ENCODE measurements at regions of chr11 and their contacts with region 1.

Region 1: GRCh38 chr11:34890812-34891211 is 25.4 kb downstream of the APIP start:
- DNase-seq: peak; percentile 59
- ATAC-seq: no peak
- H3K4me3 ChIP-seq: no peak overlapping the region
- H3K27ac ChIP-seq: no peak overlapping the region
- H3K4me1 ChIP-seq: peaks cover 22% of the 10 kb centered on the region
- H3K27me3 ChIP-seq: no peaks in the 10 kb centered on the region
- CTCF ChIP-seq: peak; percentile 61
- EP300 ChIP-seq: no peak
- POLR2A ChIP-seq: no peak
- RAD21 ChIP-seq: peak; percentile 51; the same call in 1 of the 2 replicates

Region 2: DNA sequence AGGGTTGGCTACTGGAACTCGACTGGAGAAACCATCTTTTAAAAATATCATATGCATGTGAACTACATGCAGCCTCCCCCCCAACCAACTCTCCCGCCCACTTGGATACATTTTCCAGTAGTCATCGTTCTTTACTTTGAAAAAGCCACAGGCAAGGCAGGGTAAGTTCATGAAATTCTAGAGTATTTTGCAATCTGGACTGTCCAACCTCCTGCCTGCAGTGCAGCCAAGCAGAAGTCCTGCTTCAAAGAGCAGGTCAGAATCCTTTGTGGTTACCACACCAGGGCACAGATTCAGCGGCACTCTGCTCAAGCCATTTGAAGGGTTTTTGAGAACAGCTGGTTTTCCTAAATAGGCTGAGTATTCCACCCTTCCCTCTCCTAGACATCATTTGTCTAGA is 389.3 kb before region 1 on chr11:
- CTCF ChIA-PET with region 1: no interaction called
- POLR2A ChIA-PET with region 1: no interaction called
- in situ Hi-C with region 1: no loop called
- intact Hi-C with region 1: loop called (anchors 2 kb)
- DNase-seq: peak; percentile 92
- ATAC-seq: peak; percentile 97
- H3K4me3 ChIP-seq: no peak overlapping the region
- H3K27ac ChIP-seq: peak overlapping the region; percentile 60
- H3K4me1 ChIP-seq: peaks cover 76% of the 10 kb centered on the region
- H3K27me3 ChIP-seq: no peaks in the 10 kb centered on the region
- CTCF ChIP-seq: no peak
- EP300 ChIP-seq: peak; percentile 55 to 87
- POLR2A ChIP-seq: peak in 1 of 2 experiments; percentile 43; a peak in 2 of 4 replicates
- RAD21 ChIP-seq: no peak

Region 3: GRCh38 chr11:34565417-34566207 is 325.2 kb before region 1 on chr11:
- CTCF ChIA-PET with region 1: interaction called, 21 read pairs
- POLR2A ChIA-PET with region 1: no interaction called
- in situ Hi-C with region 1: no loop called
- intact Hi-C with region 1: loop called (anchors 5 kb)
- DNase-seq: peak; percentile 34
- ATAC-seq: peak; percentile 80
- H3K4me3 ChIP-seq: no peak overlapping the region
- H3K27ac ChIP-seq: no peak overlapping the region
- H3K4me1 ChIP-seq: peaks cover 24% of the 10 kb centered on the region
- H3K27me3 ChIP-seq: peaks cover 0 to 4% of the 10 kb centered on the region in 2 experiments; a peak in 2 of 5 replicates
- CTCF ChIP-seq: peak; percentile 69
- EP300 ChIP-seq: no peak
- POLR2A ChIP-seq: no peak
- RAD21 ChIP-seq: peak; percentile 45; the same call in 1 of the 2 replicates

Region 4: GRCh38 chr11:34749666-34750659 is 140.8 kb before region 1 on chr11:
- CTCF ChIA-PET with region 1: no interaction called
- POLR2A ChIA-PET with region 1: no interaction called
- in situ Hi-C with region 1: no loop called
- intact Hi-C with region 1: loop called (anchors 10 kb)
- DNase-seq: no peak
- ATAC-seq: no peak
- H3K4me3 ChIP-seq: no peak overlapping the region
- H3K27ac ChIP-seq: no peak overlapping the region
- H3K4me1 ChIP-seq: peaks cover 9% of the 10 kb centered on the region
- H3K27me3 ChIP-seq: no peaks in the 10 kb centered on the region; a peak in 1 of 5 replicates
- CTCF ChIP-seq: no peak
- EP300 ChIP-seq: no peak
- POLR2A ChIP-seq: no peak
- RAD21 ChIP-seq: no peak

Region 5: DNA sequence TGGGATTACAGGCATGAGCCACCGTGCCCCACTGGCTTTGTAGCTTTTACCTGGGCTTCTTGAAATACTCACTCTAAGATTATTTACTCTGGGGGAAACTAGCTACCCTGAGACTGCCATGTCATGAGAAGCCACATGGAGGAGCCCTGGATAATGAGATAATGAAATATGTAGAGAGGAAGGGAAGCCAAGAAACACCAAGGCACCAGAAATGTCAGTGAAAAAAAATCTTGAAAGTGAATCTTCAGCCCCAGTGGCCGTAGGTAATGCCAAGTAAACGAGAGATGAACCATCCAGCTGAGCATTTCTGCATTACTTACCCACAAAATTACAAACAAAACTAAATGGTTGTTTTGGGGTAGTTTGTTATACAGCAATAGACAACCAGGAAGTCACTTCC is 100.2 kb before region 1 on chr11:
- CTCF ChIA-PET with region 1: no interaction called
- POLR2A ChIA-PET with region 1: no interaction called
- in situ Hi-C with region 1: no loop called
- intact Hi-C with region 1: no loop called
- DNase-seq: no peak
- ATAC-seq: no peak
- H3K4me3 ChIP-seq: no peak overlapping the region
- H3K27ac ChIP-seq: no peak overlapping the region
- H3K4me1 ChIP-seq: peaks cover 34% of the 10 kb centered on the region
- H3K27me3 ChIP-seq: no peaks in the 10 kb centered on the region
- CTCF ChIP-seq: no peak
- EP300 ChIP-seq: no peak
- POLR2A ChIP-seq: no peak
- RAD21 ChIP-seq: no peak

Region 6: DNA sequence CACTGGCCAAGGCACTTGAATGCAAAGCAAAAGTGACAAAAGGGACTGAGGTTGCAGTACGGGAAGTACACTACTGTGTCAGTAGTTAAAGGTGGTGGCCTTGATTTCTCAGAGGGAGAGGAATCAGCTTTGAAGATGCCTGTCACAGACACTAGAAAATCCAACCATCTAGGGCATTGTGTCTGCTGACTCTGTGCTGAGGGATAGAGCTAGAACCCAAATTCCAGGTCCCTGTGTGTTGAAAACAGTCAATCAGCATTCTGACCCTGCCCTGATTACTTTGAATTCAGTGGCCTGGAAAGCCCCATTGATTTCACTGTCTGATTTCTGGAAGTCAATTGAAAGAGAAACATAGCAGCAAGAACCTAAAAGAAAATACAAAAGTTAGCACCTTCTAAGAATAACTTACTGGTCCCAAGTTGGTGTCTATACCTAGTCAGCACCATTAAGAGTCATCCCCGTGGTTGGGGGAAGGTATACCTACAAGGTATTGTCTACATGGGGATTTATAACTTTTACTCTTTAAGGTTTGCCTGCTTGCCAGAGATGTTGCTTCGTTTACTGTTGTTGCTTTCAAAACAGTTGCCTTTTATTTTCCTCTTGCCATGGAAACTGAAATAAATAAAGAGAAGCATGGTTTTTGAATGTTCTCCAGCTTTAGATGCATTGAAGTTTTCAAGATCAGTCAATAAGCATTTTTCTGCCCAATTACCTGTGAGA is 122.9 kb after region 1 on chr11:
- CTCF ChIA-PET with region 1: no interaction called
- POLR2A ChIA-PET with region 1: no interaction called
- in situ Hi-C with region 1: no loop called
- intact Hi-C with region 1: no loop called
- DNase-seq: no peak
- ATAC-seq: no peak
- H3K4me3 ChIP-seq: no peak overlapping the region
- H3K27ac ChIP-seq: no peak overlapping the region
- H3K4me1 ChIP-seq: peaks cover 28% of the 10 kb centered on the region
- H3K27me3 ChIP-seq: no peaks in the 10 kb centered on the region
- CTCF ChIP-seq: no peak
- EP300 ChIP-seq: no peak
- POLR2A ChIP-seq: no peak
- RAD21 ChIP-seq: no peak

Region 7: DNA sequence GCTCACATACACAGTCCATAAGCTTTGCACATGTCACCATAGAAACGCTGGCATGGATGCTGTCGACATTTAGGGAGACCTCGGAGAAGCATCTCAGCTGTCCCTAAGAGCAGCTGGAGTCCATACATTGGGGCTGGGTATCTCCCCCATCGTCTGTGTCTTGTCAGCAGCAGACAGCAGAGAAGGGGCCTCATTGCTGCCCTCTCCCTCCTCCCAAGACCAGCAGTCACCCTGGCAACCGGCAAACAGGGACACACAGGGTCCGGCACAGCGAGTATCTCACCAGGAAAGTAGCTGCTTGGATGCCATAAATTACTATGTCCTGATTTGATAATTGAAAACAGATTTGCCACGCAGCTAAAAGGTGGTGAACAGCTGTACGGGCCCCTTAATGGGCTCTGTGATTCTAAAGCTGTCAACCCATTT is 332.6 kb after region 1 on chr11:
- CTCF ChIA-PET with region 1: no interaction called
- POLR2A ChIA-PET with region 1: no interaction called
- in situ Hi-C with region 1: no loop called
- intact Hi-C with region 1: no loop called
- DNase-seq: no peak
- ATAC-seq: no peak
- H3K4me3 ChIP-seq: no peak overlapping the region
- H3K27ac ChIP-seq: no peak overlapping the region
- H3K4me1 ChIP-seq: 0 out of 2 replicates have a peak, but pooled peaks cover 6% of the 10 kb centered on the region
- H3K27me3 ChIP-seq: peaks cover 0 to 8% of the 10 kb centered on the region in 2 experiments; a peak in 2 of 5 replicates
- CTCF ChIP-seq: no peak
- EP300 ChIP-seq: no peak
- POLR2A ChIP-seq: no peak
- RAD21 ChIP-seq: no peak

Region 8: DNA sequence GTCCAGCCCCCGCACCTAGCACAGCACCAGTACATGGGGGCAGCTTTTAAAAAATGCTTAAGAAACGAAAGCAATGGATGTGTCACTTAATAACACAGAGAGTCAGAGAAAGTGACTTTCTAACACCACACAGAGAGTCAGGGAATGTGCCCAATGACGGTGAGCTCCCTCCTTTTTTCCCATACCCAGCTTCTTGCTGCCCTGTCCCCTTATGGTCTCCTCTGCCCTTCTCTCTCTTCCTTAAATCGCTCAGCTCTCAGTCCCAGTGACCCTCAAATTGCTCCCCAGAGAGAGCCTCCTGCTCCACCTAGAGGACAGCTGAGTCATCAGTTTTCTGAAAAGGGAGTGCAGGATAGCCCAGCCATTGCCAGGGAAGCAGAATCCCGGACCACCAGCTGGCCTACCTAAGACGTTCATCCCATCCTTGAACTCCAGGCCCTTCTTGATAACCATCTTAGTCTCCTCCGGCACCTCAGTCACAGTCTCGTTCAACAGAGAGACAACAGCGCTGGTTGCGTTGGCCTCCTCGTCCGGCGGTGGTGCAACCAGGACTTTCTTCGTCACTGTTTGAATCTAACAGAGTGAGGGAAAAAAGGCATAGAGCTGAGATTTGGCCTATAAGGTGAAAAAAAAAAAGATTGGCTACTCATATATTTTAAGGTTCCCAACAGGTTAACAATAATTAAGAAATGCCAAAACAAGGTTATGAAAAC is 415.0 kb after region 1 on chr11:
- CTCF ChIA-PET with region 1: no interaction called
- POLR2A ChIA-PET with region 1: no interaction called
- in situ Hi-C with region 1: no loop called
- intact Hi-C with region 1: no loop called
- DNase-seq: peak; percentile 12
- ATAC-seq: peak; percentile 20; the same call in 1 of the 3 replicates
- H3K4me3 ChIP-seq: no peak overlapping the region
- H3K27ac ChIP-seq: peak overlapping the region; percentile 87
- H3K4me1 ChIP-seq: peaks cover 26% of the 10 kb centered on the region
- H3K27me3 ChIP-seq: no peaks in the 10 kb centered on the region
- CTCF ChIP-seq: peak; percentile 47
- EP300 ChIP-seq: no peak
- POLR2A ChIP-seq: no peak
- RAD21 ChIP-seq: no peak